Right cardiac atrium (tissue), 5 donors: ENCODE measurements at regions of chr16 and their contacts with region 1.

Region 1: GRCh38 chr16:15466886-15467781 is 32.7 kb downstream of the BMERB1 start:
- DNase-seq: no peak
- ATAC-seq: no peak
- H3K4me3 ChIP-seq: no peak overlapping the region
- H3K27ac ChIP-seq: no peak overlapping the region
- H3K4me1 ChIP-seq: no peaks in the 10 kb centered on the region
- H3K27me3 ChIP-seq: no peaks in the 10 kb centered on the region

Region 2: DNA sequence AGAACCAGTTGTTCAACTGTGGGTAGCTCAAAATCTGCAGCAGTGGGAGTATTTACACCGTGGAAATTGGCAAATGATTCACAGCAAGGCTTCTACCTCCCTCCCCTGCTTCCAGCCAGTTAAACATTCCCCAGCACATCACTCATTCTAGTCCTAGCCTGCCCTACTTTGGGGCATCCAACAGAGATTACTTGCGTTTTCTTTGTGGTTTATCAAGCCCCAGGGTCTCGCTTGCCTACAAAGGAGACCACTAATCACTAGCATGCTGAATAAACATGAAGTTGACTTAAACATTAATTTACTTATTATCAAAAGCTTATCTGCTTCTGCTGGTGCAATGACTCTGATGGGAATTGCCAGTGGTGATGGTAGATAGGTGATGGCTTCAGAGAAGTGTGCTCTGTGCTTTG is 81.4 kb after region 1 on chr16:
- intact Hi-C with region 1: loop called in 1 of 4 experiments (anchors 10 kb)
- DNase-seq: no peak
- ATAC-seq: no peak
- H3K4me3 ChIP-seq: no peak overlapping the region
- H3K27ac ChIP-seq: no peak overlapping the region
- H3K4me1 ChIP-seq: no peaks in the 10 kb centered on the region
- H3K27me3 ChIP-seq: no peaks in the 10 kb centered on the region